ENCODE measurements at regions of chr14 and their contacts with region 1.

Region 1: GRCh38 chr14:22375321-22375930 is 213.6 kb downstream of the DAD1 start:
- DNase-seq: peak; percentile 63
- H3K4me3 Mint-ChIP-seq: no peak overlapping the region
- H3K27ac Mint-ChIP-seq: no peak overlapping the region
- H3K4me1 Mint-ChIP-seq: peaks cover 9% of the 10 kb centered on the region
- H3K27me3 Mint-ChIP-seq: peaks cover 20% of the 10 kb centered on the region
- CTCF ChIP-seq: peak; percentile 69

Region 2: DNA sequence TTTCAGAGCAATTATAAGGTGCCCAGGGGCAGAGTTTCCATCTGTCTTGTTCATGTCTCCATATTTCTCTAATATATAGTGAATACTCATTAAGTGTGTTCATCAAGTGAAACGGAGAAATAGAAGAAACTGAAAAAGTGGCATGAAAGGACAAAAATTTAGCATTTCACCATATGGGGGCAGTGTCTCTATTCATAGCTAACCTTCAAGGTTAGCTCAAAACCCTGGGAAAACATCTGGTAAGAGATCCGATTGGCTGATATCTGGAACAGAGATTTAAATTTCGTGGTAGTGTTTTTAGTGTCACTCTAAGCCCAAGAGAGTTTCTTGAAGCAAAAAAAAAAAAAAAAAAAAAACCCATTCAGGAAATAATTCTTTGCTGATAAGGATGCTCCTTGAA is 153.9 kb before region 1 on chr14:
- CTCF ChIA-PET with region 1: interaction called, 8 read pairs
- POLR2A ChIA-PET with region 1: no interaction called
- intact Hi-C with region 1: loop called (anchors 1 kb)
- DNase-seq: peak; percentile 33
- H3K4me3 Mint-ChIP-seq: no peak overlapping the region
- H3K27ac Mint-ChIP-seq: no peak overlapping the region
- H3K4me1 Mint-ChIP-seq: peaks cover 8% of the 10 kb centered on the region
- H3K27me3 Mint-ChIP-seq: peaks cover 24% of the 10 kb centered on the region
- CTCF ChIP-seq: peak; percentile 43

Region 3: GRCh38 chr14:22303589-22304195 is 71.7 kb before region 1 on chr14:
- CTCF ChIA-PET with region 1: interaction called, 14 read pairs
- POLR2A ChIA-PET with region 1: no interaction called
- intact Hi-C with region 1: no loop called
- DNase-seq: peak; percentile 15
- H3K4me3 Mint-ChIP-seq: no peak overlapping the region
- H3K27ac Mint-ChIP-seq: no peak overlapping the region
- H3K4me1 Mint-ChIP-seq: no peaks in the 10 kb centered on the region
- H3K27me3 Mint-ChIP-seq: no peaks in the 10 kb centered on the region
- CTCF ChIP-seq: peak; percentile 52

Region 4: GRCh38 chr14:22314181-22314820 is 61.1 kb before region 1 on chr14:
- CTCF ChIA-PET with region 1: interaction called, 294 read pairs
- POLR2A ChIA-PET with region 1: interaction called, 24 read pairs
- intact Hi-C with region 1: loop called (anchors 1 kb)
- DNase-seq: peak; percentile 70
- H3K4me3 Mint-ChIP-seq: no peak overlapping the region
- H3K27ac Mint-ChIP-seq: no peak overlapping the region
- H3K4me1 Mint-ChIP-seq: peaks cover 6% of the 10 kb centered on the region
- H3K27me3 Mint-ChIP-seq: no peaks in the 10 kb centered on the region
- CTCF ChIP-seq: peak; percentile 67

Region 5: DNA sequence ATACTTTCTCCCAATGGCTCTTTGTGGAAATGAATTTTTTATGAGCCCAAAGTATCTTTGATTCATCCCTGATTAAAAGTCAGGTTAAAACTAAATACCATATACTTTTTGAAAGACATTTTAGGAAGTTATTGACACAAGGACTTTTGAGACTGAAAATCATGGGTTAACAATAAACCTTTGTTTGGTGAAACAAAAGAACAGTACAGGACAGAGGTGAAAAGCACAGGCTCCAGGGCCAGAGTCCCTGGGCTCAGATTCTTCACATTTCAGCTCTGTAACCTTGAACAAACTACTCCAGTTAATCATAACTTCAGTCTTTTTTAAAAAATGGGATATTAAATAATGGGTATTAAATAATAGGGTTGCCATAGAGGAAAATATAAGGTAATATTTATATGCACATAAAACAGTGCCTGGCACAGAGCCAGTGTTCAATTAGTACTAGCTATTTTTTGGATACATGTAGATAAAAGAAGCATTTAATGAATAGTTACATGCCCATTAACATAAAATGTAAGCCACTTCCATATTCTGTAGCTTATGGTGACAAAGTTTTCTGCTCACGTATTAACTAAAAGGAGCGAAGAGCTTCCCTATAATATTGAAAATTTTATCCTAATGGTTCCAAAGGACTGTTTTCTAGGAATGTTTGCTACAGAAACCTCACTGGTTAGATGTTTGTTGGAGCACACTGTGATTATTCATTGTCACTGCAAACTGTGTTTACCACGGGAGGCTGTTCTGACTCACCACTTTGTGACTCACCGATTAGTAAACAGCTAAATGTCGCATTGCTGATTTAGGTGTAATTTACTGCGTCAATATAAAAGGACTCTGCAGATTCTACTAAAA is 41.8 kb before region 1 on chr14:
- CTCF ChIA-PET with region 1: interaction called, 9 read pairs
- POLR2A ChIA-PET with region 1: interaction called, 52 read pairs
- intact Hi-C with region 1: no loop called
- DNase-seq: peak; percentile 55
- H3K4me3 Mint-ChIP-seq: peak overlapping the region; percentile 29
- H3K27ac Mint-ChIP-seq: no peak overlapping the region
- H3K4me1 Mint-ChIP-seq: no peaks in the 10 kb centered on the region
- H3K27me3 Mint-ChIP-seq: no peaks in the 10 kb centered on the region
- CTCF ChIP-seq: no peak

Region 6: GRCh38 chr14:22579236-22579635 is 203.8 kb after region 1 on chr14:
- CTCF ChIA-PET with region 1: no interaction called
- POLR2A ChIA-PET with region 1: no interaction called
- intact Hi-C with region 1: no loop called
- DNase-seq: no peak
- H3K4me3 Mint-ChIP-seq: no peak overlapping the region
- H3K27ac Mint-ChIP-seq: no peak overlapping the region
- H3K4me1 Mint-ChIP-seq: peaks cover 21% of the 10 kb centered on the region
- H3K27me3 Mint-ChIP-seq: no peaks in the 10 kb centered on the region
- CTCF ChIP-seq: no peak